ENCODE measurements at regions of chr12 and their contacts with region 1.

Region 1: DNA sequence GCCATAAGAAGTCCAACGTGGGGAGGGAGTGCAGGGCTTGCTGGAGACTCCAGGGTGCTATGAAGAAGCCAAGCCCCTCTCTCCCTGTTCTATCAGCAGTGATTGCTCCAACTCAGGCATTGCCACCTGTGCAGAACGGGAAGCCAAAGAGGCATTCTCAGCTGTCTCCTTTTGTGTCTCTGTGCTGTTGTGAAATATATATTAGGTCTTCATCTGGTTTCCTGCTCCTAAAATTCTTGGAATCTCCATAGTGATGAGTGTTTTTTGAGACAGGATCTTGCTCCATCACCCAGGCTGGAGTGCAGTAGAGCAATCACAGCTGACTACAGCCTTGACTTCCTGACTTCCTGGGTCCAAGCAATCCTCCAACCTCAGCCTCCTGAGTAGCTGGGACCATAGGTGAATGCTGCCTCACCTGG is 51.2 kb upstream of the AEBP2 start:
- DNase-seq: no peak
- H3K4me3 ChIP-seq: no peak overlapping the region
- H3K27ac ChIP-seq: no peak overlapping the region
- H3K4me1 ChIP-seq: peaks cover 2% of the 10 kb centered on the region
- H3K27me3 ChIP-seq: no peaks in the 10 kb centered on the region
- CTCF ChIP-seq: no peak

Region 2: GRCh38 chr12:19312637-19313036 is 75.5 kb before region 1 on chr12:
- CTCF ChIA-PET with region 1: no interaction called
- dilution Hi-C with region 1: loop called (anchors 5 kb)
- in situ Hi-C with region 1: no loop called
- intact Hi-C with region 1: no loop called
- DNase-seq: no peak
- H3K4me3 ChIP-seq: no peak overlapping the region
- H3K27ac ChIP-seq: no peak overlapping the region
- H3K4me1 ChIP-seq: no peaks in the 10 kb centered on the region
- H3K27me3 ChIP-seq: no peaks in the 10 kb centered on the region
- CTCF ChIP-seq: no peak

Region 3: DNA sequence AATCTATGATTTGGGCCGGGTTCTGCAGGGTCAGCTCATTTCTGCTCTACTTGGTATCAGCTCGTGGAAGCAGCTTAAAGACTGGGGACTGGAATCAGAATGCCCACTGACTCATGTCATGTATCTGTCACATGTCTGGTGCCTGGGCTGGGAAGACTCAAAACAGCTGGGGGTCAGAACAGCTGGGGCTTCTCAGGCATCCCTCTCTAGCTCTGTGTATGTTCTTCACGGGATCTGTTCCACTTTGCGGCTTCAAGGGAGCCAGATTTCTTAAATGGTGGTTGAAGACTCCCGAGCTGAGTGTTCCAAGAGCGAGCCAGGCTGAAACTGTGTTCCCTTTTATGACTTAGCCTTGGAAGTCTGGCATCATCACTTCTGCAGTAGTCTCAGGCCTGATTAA is 63.1 kb after region 1 on chr12:
- CTCF ChIA-PET with region 1: interaction called, 13 read pairs
- dilution Hi-C with region 1: no loop called
- in situ Hi-C with region 1: no loop called
- intact Hi-C with region 1: no loop called
- DNase-seq: no peak
- H3K4me3 ChIP-seq: no peak overlapping the region
- H3K27ac ChIP-seq: no peak overlapping the region
- H3K4me1 ChIP-seq: no peaks in the 10 kb centered on the region
- H3K27me3 ChIP-seq: no peaks in the 10 kb centered on the region
- CTCF ChIP-seq: no peak

Measured in mammary epithelial cell (primary cell).